ENCODE measurements at regions of chr3 and their contacts with region 1.

Region 1: DNA sequence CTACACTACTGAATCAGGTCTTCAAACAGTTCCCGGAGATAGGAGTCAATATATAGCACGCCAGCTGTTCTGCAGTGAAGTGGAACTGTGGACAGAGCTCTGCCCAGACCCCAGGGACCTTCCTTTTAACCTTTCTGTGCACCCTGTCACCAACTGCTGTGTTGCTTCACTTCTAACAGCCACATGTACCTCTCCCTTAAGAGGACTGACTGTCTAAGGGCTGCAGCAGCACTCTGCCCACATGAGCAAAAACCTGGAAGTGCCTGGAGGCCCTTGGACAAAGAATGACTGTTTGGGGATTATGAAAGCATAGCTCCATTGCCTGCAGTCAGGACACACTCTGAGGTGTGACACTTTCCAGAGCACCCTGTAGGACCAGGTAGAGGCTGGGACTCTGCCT is 88.3 kb upstream of the CTNNB1 start:
- DNase-seq: no peak
- H3K4me3 ChIP-seq: no peak overlapping the region
- H3K27ac ChIP-seq: no peak overlapping the region
- H3K4me1 ChIP-seq: no peaks in the 10 kb centered on the region
- H3K27me3 ChIP-seq: no peaks in the 10 kb centered on the region
- CTCF ChIP-seq: no peak
- EP300 ChIP-seq: no peak
- POLR2A ChIP-seq: no peak

Region 2: DNA sequence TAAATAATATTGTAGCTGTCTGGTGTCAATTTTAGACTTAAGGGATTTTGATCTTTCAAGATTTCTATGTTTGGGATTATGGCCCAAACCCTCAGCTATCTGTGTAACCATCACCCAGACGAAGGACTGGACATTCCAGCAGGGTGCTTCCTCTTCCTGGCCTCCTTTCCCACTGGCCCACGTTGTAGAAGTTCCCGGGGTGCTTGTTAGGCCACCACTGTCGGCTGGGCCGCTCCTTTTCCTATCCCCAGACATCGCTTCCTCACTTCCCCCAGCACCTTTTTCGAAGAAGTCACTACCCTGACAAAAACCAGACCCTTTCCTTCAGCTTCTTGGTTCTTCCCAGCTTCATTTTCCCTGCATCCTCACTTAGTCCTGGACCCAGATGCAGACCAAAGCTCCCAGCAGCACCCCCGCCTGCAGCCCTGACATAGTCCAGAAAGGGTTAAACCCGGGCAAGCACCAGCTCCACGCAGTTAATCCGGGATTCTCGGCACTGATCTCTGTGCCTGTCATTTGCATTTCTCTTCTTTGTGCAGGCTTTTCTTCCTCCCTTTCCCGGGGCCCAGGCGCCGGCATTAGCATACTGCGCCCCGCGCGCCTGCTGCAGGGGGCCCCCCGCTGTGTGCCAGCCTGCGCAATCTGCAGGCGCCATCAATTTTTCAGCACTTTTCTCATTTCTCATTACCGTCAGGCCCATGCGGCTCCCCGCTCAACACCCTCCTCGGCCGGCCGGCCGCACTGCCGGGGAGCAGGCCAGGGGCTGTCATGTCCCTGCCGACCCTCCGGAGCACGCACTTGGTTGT is 495.7 kb before region 1 on chr3:
- intact Hi-C with region 1: loop called in 1 of 4 experiments (anchors 5 kb)
- DNase-seq: no peak
- H3K4me3 ChIP-seq: no peak overlapping the region
- H3K27ac ChIP-seq: no peak overlapping the region
- H3K4me1 ChIP-seq: no peaks in the 10 kb centered on the region
- H3K27me3 ChIP-seq: no peaks in the 10 kb centered on the region
- CTCF ChIP-seq: no peak
- EP300 ChIP-seq: no peak
- POLR2A ChIP-seq: no peak

Region 3: GRCh38 chr3:40920041-40920440 is 191.0 kb before region 1 on chr3:
- intact Hi-C with region 1: no loop called
- DNase-seq: no peak
- H3K4me3 ChIP-seq: no peak overlapping the region
- H3K27ac ChIP-seq: no peak overlapping the region
- H3K4me1 ChIP-seq: peaks cover 7% of the 10 kb centered on the region
- H3K27me3 ChIP-seq: no peaks in the 10 kb centered on the region
- CTCF ChIP-seq: no peak
- EP300 ChIP-seq: no peak
- POLR2A ChIP-seq: no peak

Region 4: GRCh38 chr3:41286305-41286704 is 175.3 kb after region 1 on chr3:
- intact Hi-C with region 1: no loop called
- DNase-seq: no peak
- H3K4me3 ChIP-seq: no peak overlapping the region
- H3K27ac ChIP-seq: no peak overlapping the region
- H3K4me1 ChIP-seq: no peaks in the 10 kb centered on the region
- H3K27me3 ChIP-seq: no peaks in the 10 kb centered on the region
- CTCF ChIP-seq: no peak
- EP300 ChIP-seq: no peak
- POLR2A ChIP-seq: no peak